ENCODE measurements at regions of chr22 and their contacts with region 1.

Region 1: GRCh38 chr22:20916983-20917810 is at the start of gene CRKL:
- H3K4me3 Mint-ChIP-seq: peak within 1 kb of the TSS; percentile 97
- H3K27ac Mint-ChIP-seq: peak within 1 kb of the TSS; percentile 83
- H3K4me1 Mint-ChIP-seq: peaks cover 43% of the 10 kb centered on the region
- H3K27me3 Mint-ChIP-seq: no peaks in the 10 kb centered on the region

Region 2: DNA sequence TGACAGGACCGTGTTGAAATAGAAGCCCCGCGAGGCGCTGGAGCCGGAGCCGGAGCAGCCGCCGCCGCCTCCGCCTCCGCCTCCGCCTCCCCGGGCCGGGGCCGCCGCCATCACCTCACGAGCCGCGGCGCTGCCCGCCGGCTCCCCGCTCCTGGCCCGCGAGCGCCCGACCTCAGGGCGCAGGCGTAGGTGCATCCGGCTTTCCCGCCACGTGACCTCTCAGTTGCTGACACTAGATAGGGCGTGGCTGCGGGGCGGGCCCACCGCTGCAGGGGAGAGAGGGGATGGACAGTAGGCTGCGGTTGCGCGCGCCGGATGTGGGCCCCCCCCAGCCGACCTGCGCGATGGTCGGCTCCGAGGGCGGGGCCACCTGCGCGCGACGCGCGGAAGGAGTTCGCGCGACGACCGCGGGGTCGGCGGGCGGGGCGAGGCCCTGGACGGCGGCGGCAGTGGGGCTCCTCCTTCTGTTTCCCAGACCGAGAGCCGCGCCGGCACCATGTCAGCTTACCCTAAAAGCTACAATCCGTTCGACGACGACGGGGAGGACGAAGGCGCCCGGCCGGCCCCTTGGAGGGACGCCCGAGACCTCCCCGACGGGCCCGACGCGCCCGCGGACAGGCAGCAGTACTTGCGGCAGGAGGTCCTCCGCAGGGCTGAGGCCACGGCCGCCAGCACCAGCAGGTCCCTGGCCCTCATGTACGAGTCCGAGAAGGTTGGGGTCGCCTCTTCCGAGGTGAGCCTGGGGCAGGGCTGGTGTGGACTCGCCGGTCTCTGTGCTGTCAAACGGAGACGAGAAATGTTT is 58.4 kb before region 1 on chr22 and contains the starts of genes PI4KA and SNAP29:
- intact Hi-C with region 1: loop called (anchors 2 kb)
- H3K4me3 Mint-ChIP-seq: peak within 1 kb of the TSS; percentile 90
- H3K27ac Mint-ChIP-seq: peak within 1 kb of the TSS; percentile 91
- H3K4me1 Mint-ChIP-seq: peaks cover 70% of the 10 kb centered on the region
- H3K27me3 Mint-ChIP-seq: no peaks in the 10 kb centered on the region

Measured in dendritic cell treated with granulocyte-macrophage colony-stimulating factor and Interleukin-4, amounts not matched to agents 40 ng/mL and 50 ng/mL, for 4 days (primary cell).